Posterior vena cava (tissue), 2 donors: ENCODE measurements at regions of chr9 and their contacts with region 1.

Region 1: GRCh38 chr9:91433180-91433579 is 9.5 kb upstream of the NFIL3 start:
- DNase-seq: no peak

Region 2: DNA sequence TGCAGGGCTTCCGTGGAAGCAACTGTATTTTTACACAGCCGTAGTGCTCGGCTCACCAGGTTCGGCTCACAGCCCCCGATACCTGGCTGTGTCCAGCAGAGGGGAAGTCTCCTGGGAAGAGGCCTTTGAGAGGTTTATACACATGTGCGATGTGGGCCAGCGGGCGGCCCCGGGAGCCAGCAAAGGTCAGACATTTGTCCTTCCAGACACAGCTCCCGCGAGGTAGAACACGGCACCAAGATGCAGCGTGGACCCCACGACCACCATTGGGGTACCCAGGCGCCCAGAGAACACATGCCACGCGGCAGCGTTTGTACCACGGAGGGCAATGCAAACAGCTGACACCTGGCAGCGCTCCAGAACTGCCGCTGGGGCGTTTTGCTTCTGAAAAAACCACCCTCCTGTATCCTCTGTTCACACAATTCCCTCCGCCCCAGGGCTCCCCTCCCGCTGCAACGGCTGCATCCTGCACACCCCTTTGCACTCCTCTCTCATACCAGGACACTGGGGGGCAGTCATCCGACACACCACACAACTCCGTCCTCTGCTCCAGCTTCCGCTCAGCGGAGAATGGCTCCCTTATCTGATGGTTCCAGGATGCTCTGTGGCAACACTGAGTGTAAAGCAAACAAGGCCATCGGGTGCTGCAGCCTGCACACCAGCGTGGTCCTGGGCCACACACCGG is 396.2 kb before region 1 on chr9:
- intact Hi-C with region 1: loop called in 1 of 2 experiments (anchors 10 kb)
- DNase-seq: peak; percentile 92

Region 3: DNA sequence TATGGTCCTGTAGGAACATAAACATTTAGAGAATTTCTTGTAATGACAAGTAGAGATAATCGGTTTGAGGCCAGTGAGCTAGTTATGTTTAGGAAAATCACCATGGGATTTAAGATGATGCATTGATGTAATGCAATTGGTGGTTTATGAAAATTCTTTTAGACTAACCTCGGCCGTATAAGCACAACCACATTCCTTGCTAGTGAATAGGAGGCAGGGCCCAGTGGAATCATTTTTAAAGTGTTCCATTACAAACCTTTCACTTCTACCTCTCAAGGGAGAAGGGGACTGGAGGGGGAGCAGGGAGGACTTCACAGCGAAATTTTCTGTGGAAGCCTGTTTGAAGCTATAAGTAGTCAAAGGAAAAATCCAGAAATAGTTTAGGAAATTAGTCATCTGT is 62.3 kb after region 1 on chr9:
- intact Hi-C with region 1: no loop called
- DNase-seq: no peak

Region 4: DNA sequence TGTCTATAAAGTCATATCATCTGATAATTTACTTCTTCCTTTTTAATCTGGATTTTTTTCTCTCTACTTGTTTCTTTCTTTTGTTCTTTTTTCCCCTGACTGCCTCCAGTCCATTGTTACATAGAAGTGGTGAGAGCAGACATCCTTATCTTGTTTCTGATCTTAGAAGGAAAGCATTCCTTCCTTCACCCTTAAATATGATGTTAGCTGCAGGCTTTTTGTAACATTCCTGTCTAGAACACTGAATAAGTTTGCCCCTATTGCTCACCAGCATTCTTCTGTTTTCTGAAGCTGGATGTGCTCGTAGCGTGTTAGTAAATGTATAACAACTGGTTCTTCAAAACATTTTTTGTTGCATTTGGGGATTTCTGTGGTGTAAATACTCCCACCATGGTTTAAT is 127.1 kb after region 1 on chr9:
- intact Hi-C with region 1: no loop called
- DNase-seq: no peak